ENCODE measurements at regions of chr4 and their contacts with region 1.

Region 1: GRCh38 chr4:143513306-143514168 is at the start of gene SMARCA5:
- DNase-seq: peak; percentile 98
- ATAC-seq: peak; percentile 89
- H3K4me3 ChIP-seq: peak within 1 kb of the TSS; percentile 94
- H3K27ac ChIP-seq: peak within 1 kb of the TSS; percentile 88
- H3K4me1 ChIP-seq: no peaks in the 10 kb centered on the region
- H3K27me3 ChIP-seq: no peaks in the 10 kb centered on the region; a peak in 1 of 4 replicates
- CTCF ChIP-seq: no peak
- EP300 ChIP-seq: no peak
- POLR2A ChIP-seq: peak; percentile 93
- RAD21 ChIP-seq: no peak
- polyA plus RNA-seq, gene SMARCA5: 21.7 to 32.2 TPM

Region 2: GRCh38 chr4:143189528-143189927 is 324.0 kb before region 1 on chr4:
- CTCF ChIA-PET with region 1: no interaction called
- POLR2A ChIA-PET with region 1: interaction called, 10 read pairs
- RAD21 ChIA-PET with region 1: no interaction called
- SMC1A ChIA-PET with region 1: interaction called, 3 read pairs
- in situ Hi-C with region 1: no loop called
- intact Hi-C with region 1: loop called (anchors 2 kb)
- DNase-seq: no peak
- ATAC-seq: no peak
- H3K4me3 ChIP-seq: peak overlapping the region; percentile 39
- H3K27ac ChIP-seq: peak overlapping the region; percentile 16
- H3K4me1 ChIP-seq: 0 out of 2 replicates have a peak, but pooled peaks cover 6% of the 10 kb centered on the region
- H3K27me3 ChIP-seq: no peaks in the 10 kb centered on the region
- CTCF ChIP-seq: no peak
- EP300 ChIP-seq: no peak
- POLR2A ChIP-seq: no peak
- RAD21 ChIP-seq: no peak

Region 3: DNA sequence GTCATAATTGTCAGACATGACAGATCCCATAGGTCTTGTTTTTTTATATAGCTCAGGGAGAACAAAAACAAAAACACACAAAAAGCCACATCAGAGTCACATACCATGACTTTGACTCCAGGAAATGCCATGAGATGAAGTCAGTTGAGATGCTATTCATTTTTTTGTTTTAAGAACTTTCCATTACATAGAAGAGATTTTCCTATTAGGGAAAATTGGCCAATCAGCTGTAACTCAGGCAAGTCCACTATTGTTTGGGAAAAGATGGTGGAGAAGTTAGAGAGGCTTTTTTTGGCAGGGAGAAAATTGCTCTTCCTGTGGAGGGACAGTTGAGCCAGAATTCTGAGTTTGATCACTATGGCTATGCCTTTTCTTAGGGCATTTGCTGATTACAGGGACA is 72.5 kb after region 1 on chr4:
- CTCF ChIA-PET with region 1: no interaction called
- POLR2A ChIA-PET with region 1: no interaction called
- RAD21 ChIA-PET with region 1: no interaction called
- SMC1A ChIA-PET with region 1: no interaction called
- in situ Hi-C with region 1: no loop called
- intact Hi-C with region 1: no loop called
- DNase-seq: no peak
- ATAC-seq: no peak
- H3K4me3 ChIP-seq: no peak overlapping the region
- H3K27ac ChIP-seq: no peak overlapping the region
- H3K4me1 ChIP-seq: no peaks in the 10 kb centered on the region
- H3K27me3 ChIP-seq: no peaks in the 10 kb centered on the region
- CTCF ChIP-seq: no peak
- EP300 ChIP-seq: no peak
- POLR2A ChIP-seq: no peak
- RAD21 ChIP-seq: no peak

Measured in GM12878 (cell line).